Naive thymus-derived CD4-positive, alpha-beta T cell (primary cell): ENCODE measurements at regions of chr15 and their contacts with region 1.

Region 1: GRCh38 chr15:34587717-34588674 is 4.5 kb upstream of the GOLGA8B start:
- DNase-seq: peak in 8 of 9 donors; percentile 39 to 74 (median 62)
- ATAC-seq: peak; percentile 72
- H3K4me3 ChIP-seq: no peak overlapping the region
- H3K4me3 Mint-ChIP-seq: peak overlapping the region; percentile 0 to 83 (median 76)
- H3K27ac ChIP-seq: no peak overlapping the region
- H3K27ac Mint-ChIP-seq: peak overlapping the region in 4 of 9 donors; percentile 3 to 83 (median 40)
- H3K4me1 ChIP-seq: peaks cover 0 to 4% of the 10 kb centered on the region in 2 donors
- H3K4me1 Mint-ChIP-seq: peaks cover 5 to 13% (median 6%) of the 10 kb centered on the region in 7 donors
- H3K27me3 ChIP-seq: no peaks in the 10 kb centered on the region
- H3K27me3 Mint-ChIP-seq: peaks cover 3 to 32% (median 11%) of the 10 kb centered on the region in 5 donors

Region 2: GRCh38 chr15:34101366-34102175 is 486.4 kb before region 1 on chr15 and contains the starts of genes EMC7 and PGBD4:
- CTCF ChIA-PET with region 1: no interaction called
- POLR2A ChIA-PET with region 1: interaction called, 6 read pairs
- intact Hi-C with region 1: loop called (anchors 1 kb)
- DNase-seq: peak; percentile 98 to 99 (median 99)
- ATAC-seq: peak; percentile 99
- H3K4me3 ChIP-seq: peak within 1 kb of the TSS; percentile 66
- H3K4me3 Mint-ChIP-seq: peak within 1 kb of the TSS; percentile 91 to 100 (median 96)
- H3K27ac ChIP-seq: peak within 1 kb of the TSS; percentile 96
- H3K27ac Mint-ChIP-seq: peak within 1 kb of the TSS; percentile 97 to 100 (median 98)
- H3K4me1 ChIP-seq: peaks cover 16 to 27% of the 10 kb centered on the region in 2 donors
- H3K4me1 Mint-ChIP-seq: peaks cover 15 to 56% (median 45%) of the 10 kb centered on the region in 7 donors
- H3K27me3 ChIP-seq: no peaks in the 10 kb centered on the region
- H3K27me3 Mint-ChIP-seq: peaks cover 0 to 3% (median 0%) of the 10 kb centered on the region in 5 donors
- total RNA-seq, gene EMC7: 30.1 to 65.1 (median 36.9) TPM
- total RNA-seq, gene PGBD4: 3.2 to 6.5 (median 4.2) TPM

Region 3: GRCh38 chr15:34209421-34210282 is 378.3 kb before region 1 on chr15 and contains the start of gene KATNBL1:
- CTCF ChIA-PET with region 1: interaction called, 3 read pairs
- POLR2A ChIA-PET with region 1: no interaction called
- intact Hi-C with region 1: loop called in 1 of 2 experiments (anchors 1 kb)
- DNase-seq: peak; percentile 81 to 98 (median 89)
- ATAC-seq: peak; percentile 100
- H3K4me3 ChIP-seq: peak within 1 kb of the TSS; percentile 69
- H3K4me3 Mint-ChIP-seq: peak within 1 kb of the TSS; percentile 84 to 94 (median 91)
- H3K27ac ChIP-seq: peak within 1 kb of the TSS; percentile 77
- H3K27ac Mint-ChIP-seq: peak within 1 kb of the TSS; percentile 28 to 93 (median 84)
- H3K4me1 ChIP-seq: peaks cover 0 to 5% of the 10 kb centered on the region in 2 donors
- H3K4me1 Mint-ChIP-seq: peaks cover 8 to 33% (median 25%) of the 10 kb centered on the region in 7 donors
- H3K27me3 ChIP-seq: no peaks in the 10 kb centered on the region
- H3K27me3 Mint-ChIP-seq: peaks cover 0 to 4% (median 0%) of the 10 kb centered on the region in 5 donors
- total RNA-seq, gene KATNBL1: 21.8 to 40.3 (median 33.0) TPM

Region 4: GRCh38 chr15:34241372-34242330 is 346.3 kb before region 1 on chr15:
- CTCF ChIA-PET with region 1: interaction called, 13 read pairs
- POLR2A ChIA-PET with region 1: no interaction called
- intact Hi-C with region 1: loop called in 1 of 2 experiments (anchors 1 kb)
- DNase-seq: peak in 7 of 9 donors; percentile 38 to 65 (median 52)
- ATAC-seq: peak; percentile 91
- H3K4me3 ChIP-seq: no peak overlapping the region
- H3K4me3 Mint-ChIP-seq: no peak overlapping the region
- H3K27ac ChIP-seq: no peak overlapping the region
- H3K27ac Mint-ChIP-seq: peak overlapping the region in 7 of 9 donors; percentile 7 to 75 (median 47)
- H3K4me1 ChIP-seq: no peaks in the 10 kb centered on the region
- H3K4me1 Mint-ChIP-seq: peaks cover 0 to 13% (median 4%) of the 10 kb centered on the region in 7 donors
- H3K27me3 ChIP-seq: no peaks in the 10 kb centered on the region
- H3K27me3 Mint-ChIP-seq: no peaks in the 10 kb centered on the region

Region 5: GRCh38 chr15:34342737-34343575 is 245.0 kb before region 1 on chr15 and contains the starts of genes NOP10 and NUTM1:
- CTCF ChIA-PET with region 1: interaction called, 5 read pairs
- POLR2A ChIA-PET with region 1: interaction called, 3 read pairs
- intact Hi-C with region 1: loop called (anchors 1 to 10 kb)
- DNase-seq: peak; percentile 86 to 96 (median 90)
- ATAC-seq: peak; percentile 95
- H3K4me3 ChIP-seq: peak within 1 kb of the TSS; percentile 98
- H3K4me3 Mint-ChIP-seq: no peak within 1 kb of the TSS
- H3K27ac ChIP-seq: peak within 1 kb of the TSS; percentile 91
- H3K27ac Mint-ChIP-seq: peak within 1 kb of the TSS in 8 of 9 donors; percentile 41 to 96 (median 82)
- H3K4me1 ChIP-seq: peaks cover 9 to 13% of the 10 kb centered on the region in 2 donors
- H3K4me1 Mint-ChIP-seq: peaks cover 19 to 29% (median 24%) of the 10 kb centered on the region in 7 donors
- H3K27me3 ChIP-seq: no peaks in the 10 kb centered on the region
- H3K27me3 Mint-ChIP-seq: no peaks in the 10 kb centered on the region
- total RNA-seq, gene NOP10: 31.9 to 176 (median 75.7) TPM
- total RNA-seq, gene NUTM1: not detected

Region 6: GRCh38 chr15:34456658-34457057 is 131.3 kb before region 1 on chr15:
- CTCF ChIA-PET with region 1: no interaction called
- POLR2A ChIA-PET with region 1: no interaction called
- intact Hi-C with region 1: no loop called
- DNase-seq: no peak
- ATAC-seq: no peak
- H3K4me3 ChIP-seq: no peak overlapping the region
- H3K4me3 Mint-ChIP-seq: no peak overlapping the region
- H3K27ac ChIP-seq: no peak overlapping the region
- H3K27ac Mint-ChIP-seq: no peak overlapping the region
- H3K4me1 ChIP-seq: no peaks in the 10 kb centered on the region
- H3K4me1 Mint-ChIP-seq: no peaks in the 10 kb centered on the region
- H3K27me3 ChIP-seq: peaks cover 4 to 6% of the 10 kb centered on the region in 2 donors
- H3K27me3 Mint-ChIP-seq: peaks cover 16 to 63% (median 21%) of the 10 kb centered on the region in 5 donors

Region 7: GRCh38 chr15:34514251-34514670 is 73.7 kb before region 1 on chr15:
- CTCF ChIA-PET with region 1: no interaction called
- POLR2A ChIA-PET with region 1: no interaction called
- intact Hi-C with region 1: loop called in 1 of 2 experiments (anchors 2 kb)
- DNase-seq: peak in 1 of 9 donors; percentile 49
- ATAC-seq: peak; percentile 42
- H3K4me3 ChIP-seq: peak overlapping the region; percentile 41
- H3K4me3 Mint-ChIP-seq: peak overlapping the region in 9 of 10 donors; percentile 54 to 95 (median 78)
- H3K27ac ChIP-seq: no peak overlapping the region
- H3K27ac Mint-ChIP-seq: no peak overlapping the region
- H3K4me1 ChIP-seq: no peaks in the 10 kb centered on the region
- H3K4me1 Mint-ChIP-seq: peaks cover 0 to 22% (median 8%) of the 10 kb centered on the region in 7 donors
- H3K27me3 ChIP-seq: peaks cover 0 to 5% of the 10 kb centered on the region in 2 donors
- H3K27me3 Mint-ChIP-seq: peaks cover 44 to 83% (median 62%) of the 10 kb centered on the region in 5 donors